Activated T-helper 1 cell treated with anti-CD3 and anti-CD28 coated beads, Interleukin-12 subunit alpha, Interleukin-12 subunit beta, Interleukin-2, Interleukin-4 antibody, amounts not matched to agents 30 ng/mL and 10 ng/mL and 1 ng/mL, durations not matched to agents 14 hours and 24 hours and 36 hours (primary cell): ENCODE measurements at regions of chr4 and their contacts with region 1.

Region 1: GRCh38 chr4:26746802-26747213 is 113.8 kb upstream of the STIM2 start:
- DNase-seq: peak; percentile 19
- H3K4me3 Mint-ChIP-seq: no peak overlapping the region
- H3K27ac Mint-ChIP-seq: peak overlapping the region; percentile 35
- H3K4me1 Mint-ChIP-seq: peaks cover 18% of the 10 kb centered on the region
- H3K27me3 Mint-ChIP-seq: peaks cover 27% of the 10 kb centered on the region

Region 2: DNA sequence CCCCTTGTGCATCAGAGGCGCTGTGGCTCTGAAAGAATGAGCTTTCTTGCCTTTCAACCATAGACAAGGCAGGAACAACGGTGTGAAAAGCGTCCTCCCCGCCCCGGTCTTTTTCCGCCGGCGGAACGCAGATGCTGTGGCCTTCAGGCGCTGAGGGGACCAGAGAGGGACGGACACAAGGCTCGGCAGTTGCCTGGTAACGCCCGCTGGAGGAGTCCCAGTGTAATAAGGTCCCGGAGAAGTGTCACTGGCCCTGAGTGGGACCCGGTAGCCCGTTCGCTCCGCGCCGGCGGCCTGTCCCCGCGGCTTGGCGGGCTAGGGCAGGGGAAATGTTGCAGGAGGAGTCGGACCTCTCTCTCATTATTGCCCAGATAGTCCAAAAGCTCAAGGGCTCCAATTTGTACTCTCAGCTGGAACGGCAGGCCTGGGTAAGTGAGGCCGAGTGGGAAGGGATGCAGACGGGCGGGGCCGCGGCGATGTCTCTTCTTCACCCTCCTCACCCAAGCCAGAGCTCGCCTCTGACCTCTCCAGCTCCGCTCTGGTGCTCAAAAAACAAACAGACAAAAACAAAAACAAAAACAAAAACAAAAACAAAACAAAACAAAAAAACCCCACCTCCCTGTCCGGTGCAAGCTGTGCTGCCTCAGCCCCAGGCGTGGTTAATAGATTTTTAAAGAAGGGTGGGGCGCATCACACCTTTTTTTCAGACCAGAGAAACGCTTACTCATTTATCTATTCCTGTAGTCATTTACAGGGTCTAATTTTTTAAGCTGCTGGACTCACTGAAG is 162.7 kb before region 1 on chr4 and contains the start of gene TBC1D19:
- intact Hi-C with region 1: loop called (anchors 1 kb)
- DNase-seq: peak; percentile 85
- H3K4me3 Mint-ChIP-seq: peak within 1 kb of the TSS; percentile 93
- H3K27ac Mint-ChIP-seq: peak within 1 kb of the TSS; percentile 93
- H3K4me1 Mint-ChIP-seq: peaks cover 37% of the 10 kb centered on the region
- H3K27me3 Mint-ChIP-seq: peaks cover 2% of the 10 kb centered on the region
- total RNA-seq, gene TBC1D19: 4.3 and 4.7 TPM in 2 replicates

Region 3: DNA sequence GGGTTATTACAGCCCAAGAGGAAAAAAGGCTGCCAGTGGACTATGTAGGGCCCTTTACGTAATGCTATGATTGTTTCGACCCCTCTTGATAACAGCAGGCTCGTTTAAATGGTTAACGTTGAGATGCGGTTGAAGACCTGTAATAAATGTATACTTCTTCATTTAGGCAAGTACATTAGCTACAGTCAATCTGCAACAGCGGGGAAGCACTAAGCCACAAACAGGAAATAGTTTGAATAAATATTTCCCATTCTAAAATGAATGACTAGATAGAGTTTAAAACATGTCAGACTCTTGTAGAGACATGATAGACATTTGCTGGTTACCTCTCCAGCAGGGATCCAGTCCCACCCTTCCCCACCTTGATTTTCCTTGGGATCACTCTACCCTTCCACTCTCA is 75.7 kb after region 1 on chr4:
- intact Hi-C with region 1: loop called (anchors 5 kb)
- DNase-seq: no peak
- H3K4me3 Mint-ChIP-seq: peak overlapping the region; percentile 40
- H3K27ac Mint-ChIP-seq: no peak overlapping the region
- H3K4me1 Mint-ChIP-seq: peaks cover 9% of the 10 kb centered on the region
- H3K27me3 Mint-ChIP-seq: no peaks in the 10 kb centered on the region

Region 4: DNA sequence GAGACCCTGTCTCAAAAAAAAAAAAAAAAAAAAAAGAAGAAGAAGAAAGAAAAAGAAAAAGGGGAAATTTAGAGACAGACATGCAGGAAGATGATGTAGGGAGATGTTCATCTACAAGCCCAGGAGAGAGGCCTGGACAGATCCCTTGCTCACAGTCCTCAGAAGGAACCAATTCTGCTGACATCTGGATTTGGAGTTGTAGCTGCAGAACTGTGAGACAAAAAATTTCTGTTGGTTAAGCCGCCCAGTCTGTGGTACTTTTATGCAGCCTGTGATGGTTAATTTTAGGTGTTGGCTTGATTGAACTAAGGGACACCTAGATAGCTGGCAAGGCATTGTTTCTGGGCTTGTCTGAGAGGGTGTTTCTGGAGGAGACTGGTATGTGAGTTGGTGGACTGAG is 103.7 kb after region 1 on chr4:
- intact Hi-C with region 1: no loop called
- DNase-seq: no peak
- H3K4me3 Mint-ChIP-seq: no peak overlapping the region
- H3K27ac Mint-ChIP-seq: no peak overlapping the region
- H3K4me1 Mint-ChIP-seq: peaks cover 5% of the 10 kb centered on the region
- H3K27me3 Mint-ChIP-seq: peaks cover 11% of the 10 kb centered on the region

Region 5: DNA sequence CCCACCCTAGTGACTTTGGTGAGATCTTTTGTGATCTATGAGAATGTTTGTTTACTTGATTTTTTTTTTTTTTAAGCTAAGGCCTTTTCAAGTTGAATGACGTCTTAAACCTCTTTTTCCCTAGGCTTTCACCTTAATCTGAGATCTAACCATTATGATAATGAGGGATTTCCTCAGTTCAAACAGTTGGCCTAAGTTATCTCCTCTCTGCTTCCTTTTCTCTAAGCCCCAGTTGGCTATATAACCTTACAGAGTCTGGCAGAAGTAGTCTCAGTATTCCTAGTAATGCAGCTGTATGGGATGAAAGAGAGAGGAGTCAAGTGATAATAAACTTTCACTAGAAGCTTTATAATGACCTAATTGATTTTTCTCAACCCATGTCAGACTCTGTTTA is 212.8 kb after region 1 on chr4:
- intact Hi-C with region 1: loop called (anchors 1 kb)
- DNase-seq: no peak
- H3K4me3 Mint-ChIP-seq: no peak overlapping the region
- H3K27ac Mint-ChIP-seq: peak overlapping the region; percentile 18
- H3K4me1 Mint-ChIP-seq: peaks cover 46% of the 10 kb centered on the region
- H3K27me3 Mint-ChIP-seq: no peaks in the 10 kb centered on the region

Region 6: DNA sequence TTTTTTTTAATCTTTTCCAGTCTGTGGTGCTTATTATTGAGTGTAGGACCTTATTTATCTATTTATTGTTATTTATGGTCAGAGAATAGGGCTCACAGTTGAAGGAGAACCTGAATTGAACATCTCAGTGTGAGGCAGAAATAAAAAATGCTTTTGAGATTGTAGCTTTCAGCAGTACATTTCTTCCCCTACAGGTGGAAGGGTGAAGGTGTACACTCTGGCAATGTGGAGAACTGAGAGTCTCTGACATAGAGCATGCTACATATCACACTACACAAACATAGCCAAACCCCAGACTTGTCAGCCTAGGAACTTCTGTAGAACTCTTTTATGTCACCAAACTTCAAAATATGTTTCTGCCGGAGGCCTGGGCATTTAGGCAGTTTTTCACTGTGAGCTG is 254.0 kb after region 1 on chr4:
- intact Hi-C with region 1: loop called (anchors 1 kb)
- DNase-seq: no peak
- H3K4me3 Mint-ChIP-seq: no peak overlapping the region
- H3K27ac Mint-ChIP-seq: no peak overlapping the region
- H3K4me1 Mint-ChIP-seq: peaks cover 48% of the 10 kb centered on the region
- H3K27me3 Mint-ChIP-seq: no peaks in the 10 kb centered on the region

Region 7: GRCh38 chr4:27016551-27016950 is 269.7 kb after region 1 on chr4:
- intact Hi-C with region 1: no loop called
- DNase-seq: no peak
- H3K4me3 Mint-ChIP-seq: no peak overlapping the region
- H3K27ac Mint-ChIP-seq: no peak overlapping the region
- H3K4me1 Mint-ChIP-seq: peaks cover 30% of the 10 kb centered on the region
- H3K27me3 Mint-ChIP-seq: no peaks in the 10 kb centered on the region